Adrenal gland (tissue), 19 donors: ENCODE measurements at regions of chr17 and their contacts with region 1.

Region 1: DNA sequence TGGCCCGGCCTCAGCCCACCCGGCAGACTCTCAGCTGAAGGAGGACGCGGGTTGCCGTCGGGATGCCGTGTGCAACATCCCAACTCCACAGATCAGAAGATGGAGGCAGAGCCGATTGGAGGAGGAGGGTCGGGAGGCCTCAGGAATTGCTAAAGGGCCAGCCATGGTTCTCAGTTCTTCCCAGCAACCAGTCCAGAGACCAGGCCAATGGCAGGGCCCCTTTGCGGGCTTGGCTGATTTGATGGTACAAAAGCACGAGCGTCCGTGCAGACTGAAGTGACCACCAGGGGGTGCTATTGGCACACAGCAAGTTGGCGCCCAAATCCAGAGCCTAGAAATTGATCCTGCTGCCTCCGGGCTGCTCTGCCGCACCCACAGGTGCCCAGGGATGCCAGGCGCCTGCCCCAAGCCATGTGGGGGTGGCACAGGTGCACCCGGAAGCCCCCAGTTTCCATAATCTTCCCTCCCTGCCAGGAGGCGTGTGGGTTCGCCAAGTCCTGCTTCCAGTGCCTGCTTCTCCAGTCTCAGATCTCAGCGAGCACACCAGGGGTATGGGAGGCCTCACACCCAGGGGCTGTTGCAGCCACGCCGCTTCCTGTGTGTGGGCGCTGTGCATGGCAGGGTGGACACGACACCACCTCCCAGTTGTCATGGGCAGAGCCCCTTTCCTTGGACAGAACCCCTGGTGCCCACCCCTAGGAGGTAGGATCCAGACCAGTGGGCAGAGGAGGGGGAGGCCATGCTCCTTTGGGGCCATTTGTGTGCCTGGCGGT is 7.1 kb upstream of the TEX19 start:
- DNase-seq: peak; percentile 84 to 96 (median 91)
- H3K4me3 ChIP-seq: no peak overlapping the region
- H3K27ac ChIP-seq: no peak overlapping the region
- H3K4me1 ChIP-seq: no peaks in the 10 kb centered on the region
- H3K27me3 ChIP-seq: no peaks in the 10 kb centered on the region
- CTCF ChIP-seq: peak; percentile 93 to 99 (median 96)
- POLR2A ChIP-seq: no peak

Region 2: DNA sequence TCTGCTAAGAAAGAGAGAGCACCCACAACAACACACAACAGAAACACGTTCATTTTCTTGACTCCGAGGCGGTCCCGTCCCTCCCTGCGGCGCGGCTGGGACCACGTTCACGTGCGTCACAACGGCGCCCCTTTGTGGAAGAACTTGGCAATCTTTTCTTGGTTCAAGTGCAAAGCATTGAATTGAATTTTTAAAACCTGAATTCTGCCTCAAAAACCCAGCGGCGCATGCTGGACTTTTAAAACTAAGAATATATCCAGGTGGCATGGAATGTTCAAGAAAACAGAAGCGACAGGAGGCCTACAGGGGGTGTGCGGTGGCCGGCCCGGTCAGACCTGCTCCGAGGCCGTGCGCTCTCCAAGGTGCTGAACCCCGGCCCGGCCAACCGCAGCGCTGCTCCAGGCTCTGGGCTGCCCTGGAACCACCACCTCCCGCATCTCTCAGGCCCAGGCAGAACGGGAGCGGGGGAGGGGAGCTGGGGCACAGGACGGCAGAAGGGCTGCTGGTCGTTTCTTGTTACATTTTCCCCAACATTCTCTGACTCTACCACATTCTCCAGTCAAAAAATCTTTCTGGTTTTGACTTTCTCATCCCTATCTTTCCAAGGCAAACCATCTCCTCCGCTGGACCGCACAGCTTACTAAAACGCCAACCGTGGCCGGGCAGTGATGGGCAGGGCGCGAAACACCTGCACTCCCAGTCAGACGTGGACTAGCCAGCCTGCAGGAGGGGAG is 62.8 kb after region 1 on chr17:
- intact Hi-C with region 1: loop called (anchors 1 to 5 kb)
- DNase-seq: peak; percentile 69 to 82 (median 77)
- H3K4me3 ChIP-seq: no peak overlapping the region
- H3K27ac ChIP-seq: no peak overlapping the region
- H3K4me1 ChIP-seq: peaks cover 6 to 27% of the 10 kb centered on the region in 2 donors
- H3K27me3 ChIP-seq: no peaks in the 10 kb centered on the region
- CTCF ChIP-seq: peak; percentile 44 to 86 (median 70)
- POLR2A ChIP-seq: no peak

Region 3: GRCh38 chr17:82775001-82775823 is 423.3 kb after region 1 on chr17:
- intact Hi-C with region 1: loop called in 1 of 2 experiments (anchors 5 kb)
- DNase-seq: peak; percentile 47 to 79 (median 58)
- H3K4me3 ChIP-seq: no peak overlapping the region
- H3K27ac ChIP-seq: no peak overlapping the region
- H3K4me1 ChIP-seq: no peaks in the 10 kb centered on the region
- H3K27me3 ChIP-seq: no peaks in the 10 kb centered on the region
- CTCF ChIP-seq: peak; percentile 54 to 78 (median 72)
- POLR2A ChIP-seq: no peak